ENCODE measurements at regions of chr7 and their contacts with region 1.

Region 1: GRCh38 chr7:116984917-116985316 is 31.6 kb downstream of the ST7 start:
- DNase-seq: peak; percentile 27
- ATAC-seq: peak; percentile 64
- H3K4me3 ChIP-seq: no peak overlapping the region
- H3K27ac ChIP-seq: no peak overlapping the region
- H3K4me1 ChIP-seq: peaks cover 8% of the 10 kb centered on the region
- H3K27me3 ChIP-seq: no peaks in the 10 kb centered on the region
- CTCF ChIP-seq: peak; percentile 61
- EP300 ChIP-seq: no peak
- POLR2A ChIP-seq: no peak
- RAD21 ChIP-seq: no peak

Region 2: DNA sequence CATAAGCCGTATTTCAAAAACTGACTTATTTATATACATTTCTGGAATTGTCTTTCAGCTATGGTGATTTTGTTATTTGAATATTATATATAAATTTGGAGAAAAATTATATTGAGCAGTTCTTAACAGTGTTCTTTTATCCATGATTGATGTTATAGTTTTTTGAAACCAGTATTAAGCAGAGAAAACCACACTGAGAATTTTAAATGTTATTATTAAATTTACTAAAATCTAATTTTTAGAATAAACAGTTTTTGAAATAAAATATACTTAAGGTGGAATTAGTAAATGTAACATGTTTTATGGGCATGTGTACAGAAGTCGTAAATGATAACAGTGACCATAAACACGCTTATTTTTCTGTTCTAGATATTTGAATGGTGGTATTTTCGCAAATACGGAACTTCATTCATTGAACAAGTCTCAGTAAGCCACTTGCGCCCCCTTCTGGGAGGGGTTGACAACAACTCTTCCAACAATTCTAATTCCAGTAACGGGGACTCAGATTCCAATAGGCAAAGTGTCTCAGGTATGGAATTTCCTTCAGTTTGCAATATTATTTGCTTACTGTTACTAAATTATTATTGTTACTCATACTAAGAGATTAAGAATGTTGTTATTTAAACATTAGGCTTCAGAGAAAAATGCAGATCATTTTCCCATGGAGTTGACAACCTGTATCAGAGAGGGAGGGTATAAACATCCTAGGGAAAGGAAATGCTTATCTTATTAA is 134.4 kb after region 1 on chr7:
- CTCF ChIA-PET with region 1: interaction called, 10 read pairs
- POLR2A ChIA-PET with region 1: no interaction called
- in situ Hi-C with region 1: loop called (anchors 5 kb)
- intact Hi-C with region 1: loop called (anchors 1 kb)
- DNase-seq: peak; percentile 72
- ATAC-seq: peak; percentile 57; the same call in 2 of the 3 replicates
- H3K4me3 ChIP-seq: no peak overlapping the region
- H3K27ac ChIP-seq: no peak overlapping the region
- H3K4me1 ChIP-seq: peaks cover 3% of the 10 kb centered on the region
- H3K27me3 ChIP-seq: no peaks in the 10 kb centered on the region
- CTCF ChIP-seq: peak; percentile 86
- EP300 ChIP-seq: no peak
- POLR2A ChIP-seq: no peak
- RAD21 ChIP-seq: peak; percentile 70

Region 3: GRCh38 chr7:117134889-117135552 is 150.1 kb after region 1 on chr7:
- CTCF ChIA-PET with region 1: no interaction called
- POLR2A ChIA-PET with region 1: no interaction called
- in situ Hi-C with region 1: no loop called
- intact Hi-C with region 1: no loop called
- DNase-seq: no peak
- ATAC-seq: no peak
- H3K4me3 ChIP-seq: no peak overlapping the region
- H3K27ac ChIP-seq: no peak overlapping the region
- H3K4me1 ChIP-seq: no peaks in the 10 kb centered on the region
- H3K27me3 ChIP-seq: no peaks in the 10 kb centered on the region
- CTCF ChIP-seq: no peak
- EP300 ChIP-seq: no peak
- POLR2A ChIP-seq: no peak
- RAD21 ChIP-seq: no peak